ENCODE measurements at regions of chrX and their contacts with region 1.

Region 1: GRCh38 chrX:96684339-96685209 is at the start of gene DIAPH2:
- DNase-seq: peak; percentile 87
- H3K4me3 ChIP-seq: peak within 1 kb of the TSS; percentile 89
- H3K27ac ChIP-seq: peak within 1 kb of the TSS; percentile 68
- H3K4me1 ChIP-seq: peaks cover 7% of the 10 kb centered on the region
- CTCF ChIP-seq: no peak; the same call in 1 of the 2 replicates
- total RNA-seq, gene DIAPH2: 19.1 and 21.5 TPM in 2 replicates

Region 2: GRCh38 chrX:96835660-96836289 is 151.2 kb after region 1 on chrX:
- CTCF ChIA-PET with region 1: no interaction called
- POLR2A ChIA-PET with region 1: no interaction called
- intact Hi-C with region 1: loop called (anchors 10 kb)
- DNase-seq: peak; percentile 84
- H3K4me3 ChIP-seq: peak overlapping the region; percentile 43
- H3K27ac ChIP-seq: peak overlapping the region; percentile 98
- H3K4me1 ChIP-seq: peaks cover 58% of the 10 kb centered on the region
- CTCF ChIP-seq: no peak

Region 3: GRCh38 chrX:96906741-96907140 is 222.2 kb after region 1 on chrX:
- CTCF ChIA-PET with region 1: no interaction called
- POLR2A ChIA-PET with region 1: no interaction called
- intact Hi-C with region 1: no loop called
- DNase-seq: no peak
- H3K4me3 ChIP-seq: no peak overlapping the region
- H3K27ac ChIP-seq: no peak overlapping the region
- H3K4me1 ChIP-seq: no peaks in the 10 kb centered on the region
- CTCF ChIP-seq: no peak

Region 4: DNA sequence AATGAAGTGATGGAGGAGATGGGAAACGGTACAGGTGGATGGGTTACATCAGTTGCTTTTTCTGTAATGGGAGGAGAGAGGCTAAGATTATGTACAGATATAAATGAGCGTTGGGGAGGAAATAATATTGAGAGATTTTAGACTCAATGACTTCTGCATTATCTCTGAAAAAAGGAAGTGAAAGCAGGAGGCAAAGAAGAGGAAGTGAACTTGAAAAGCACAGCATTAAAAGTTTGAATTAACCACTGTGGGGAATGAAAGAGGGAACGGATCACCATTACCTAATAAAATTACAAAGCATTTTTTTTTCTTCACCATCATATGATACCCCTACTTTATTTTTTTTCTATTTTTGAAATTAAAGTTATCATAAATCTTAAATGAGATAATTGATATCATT is 1224.7 kb after region 1 on chrX:
- CTCF ChIA-PET with region 1: no interaction called
- POLR2A ChIA-PET with region 1: no interaction called
- intact Hi-C with region 1: loop called (anchors 2 kb)
- DNase-seq: peak; percentile 79
- H3K4me3 ChIP-seq: peak overlapping the region; percentile 35
- H3K27ac ChIP-seq: peak overlapping the region; percentile 71
- H3K4me1 ChIP-seq: peaks cover 15% of the 10 kb centered on the region
- CTCF ChIP-seq: no peak

Measured in OCI-LY7 (cell line).